ENCODE measurements at regions of chr17 and their contacts with region 1.

Region 1: DNA sequence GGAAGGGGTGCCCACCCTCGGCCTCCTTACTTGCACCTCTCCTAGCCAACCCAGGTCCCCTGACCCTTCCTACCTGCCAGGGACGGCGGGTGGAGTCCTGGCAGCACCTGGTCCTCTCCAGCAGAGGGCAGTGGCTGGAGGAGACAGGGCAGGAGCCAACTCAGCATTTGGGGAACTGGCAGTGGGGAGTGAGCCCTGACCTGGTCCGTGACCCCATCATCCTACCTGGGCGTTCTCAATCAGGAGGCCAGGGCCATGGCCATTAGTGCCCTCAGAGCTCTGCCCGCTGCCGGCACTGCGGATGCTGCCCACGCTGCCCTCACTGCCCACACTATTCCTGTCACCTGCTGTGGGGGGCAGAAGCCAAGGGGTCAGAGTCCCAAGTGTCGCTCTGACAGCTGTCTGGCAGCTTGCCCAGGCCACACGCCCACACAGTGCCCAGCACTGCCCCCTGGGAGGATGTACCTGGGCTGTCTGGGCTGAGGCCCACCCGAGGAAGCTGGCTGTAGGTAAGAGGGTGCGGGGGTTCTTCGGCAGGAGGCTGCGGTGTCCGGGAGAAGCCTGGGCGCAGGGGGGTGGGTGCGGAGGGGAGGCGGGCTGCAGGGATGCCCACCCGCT is 10.9 kb downstream of the CASKIN2 start:
- DNase-seq: no peak
- H3K4me3 ChIP-seq: no peak overlapping the region
- CTCF ChIP-seq: peak; percentile 61

Region 2: DNA sequence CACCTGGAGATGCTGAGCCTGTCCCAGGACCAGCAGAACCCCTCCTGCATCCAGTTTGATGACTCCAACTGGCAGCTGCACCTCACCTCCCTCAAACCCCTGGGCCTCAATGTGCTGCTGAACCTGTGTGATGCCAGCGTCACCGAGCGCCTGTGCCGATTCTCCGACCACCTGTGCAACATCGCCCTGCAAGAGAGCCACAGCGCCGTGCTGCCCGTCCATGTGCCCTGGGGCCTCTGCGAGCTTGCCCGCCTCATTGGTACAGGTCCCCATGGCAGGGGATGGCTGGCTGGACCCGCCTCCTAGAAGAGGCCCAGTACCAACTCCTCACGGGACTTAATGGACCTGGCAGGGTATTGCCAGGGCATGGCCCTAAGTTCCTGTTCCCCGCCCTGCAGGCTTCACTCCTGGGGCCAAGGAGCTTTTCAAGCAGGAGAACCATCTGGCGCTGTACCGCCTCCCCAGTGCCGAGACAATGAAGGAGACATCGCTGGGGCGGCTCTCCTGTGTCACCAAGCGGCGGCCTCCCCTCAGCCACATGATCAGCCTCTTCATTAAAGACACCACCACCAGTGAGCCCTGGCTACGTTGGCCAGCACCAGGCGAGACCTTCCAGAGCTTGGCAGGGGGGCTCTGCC is 11.8 kb before region 1 on chr17:
- CTCF ChIA-PET with region 1: interaction called, 15 read pairs
- POLR2A ChIA-PET with region 1: no interaction called
- DNase-seq: no peak
- H3K4me3 ChIP-seq: no peak overlapping the region
- CTCF ChIP-seq: no peak

Region 3: GRCh38 chr17:75524953-75525719 is 20.7 kb after region 1 on chr17 and contains the start of gene LLGL2:
- CTCF ChIA-PET with region 1: no interaction called
- POLR2A ChIA-PET with region 1: no interaction called
- DNase-seq: no peak
- H3K4me3 ChIP-seq: peak within 1 kb of the TSS; percentile 51
- CTCF ChIP-seq: peak; percentile 15